ENCODE measurements at regions of chr4 and their contacts with region 1.

Region 1: DNA sequence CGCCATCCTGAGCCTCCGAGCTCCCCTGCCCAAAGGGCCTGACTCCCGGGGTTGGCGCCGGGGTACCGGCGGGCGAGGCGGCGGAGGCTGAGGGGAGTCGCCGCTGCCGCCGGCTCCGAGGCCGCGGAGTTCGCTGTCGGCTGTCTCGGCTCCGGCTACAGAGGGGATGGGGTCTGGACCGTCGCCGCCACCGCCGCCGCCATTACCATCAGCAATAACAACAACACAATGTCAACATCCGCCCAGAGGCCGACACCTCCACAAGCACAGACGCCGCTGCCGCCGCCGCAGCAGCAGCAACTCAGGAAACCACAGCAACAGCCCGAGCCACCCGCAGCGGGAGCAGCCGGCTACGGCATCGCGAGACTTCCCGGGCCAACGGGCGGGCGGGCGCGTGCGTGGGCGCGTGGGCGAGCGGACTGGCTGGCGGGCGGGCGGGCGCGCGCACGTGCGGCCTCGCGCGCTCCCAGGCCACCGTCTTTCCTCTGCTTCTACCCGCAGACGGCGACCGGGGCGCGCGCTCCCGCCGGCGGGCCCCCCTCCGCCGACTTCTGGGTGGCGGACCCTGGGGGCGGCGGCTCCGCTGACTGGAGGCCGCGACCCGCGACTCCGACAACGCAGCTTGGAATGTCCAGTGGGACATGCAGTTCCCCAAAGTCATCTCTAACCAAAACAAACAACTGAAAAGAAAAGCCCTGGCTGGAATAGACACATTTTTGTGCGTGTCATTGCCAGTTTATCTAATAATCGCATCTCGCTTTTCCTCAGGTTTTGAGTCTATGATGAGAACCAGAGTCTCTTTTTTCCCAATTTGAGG is at the start of gene CHIC2:
- DNase-seq: peak; percentile 96 to 99 (median 97)
- ATAC-seq: peak; percentile 74 to 95 (median 90)
- H3K4me3 ChIP-seq: peak within 1 kb of the TSS; percentile 84 to 100 (median 96)
- H3K27ac ChIP-seq: peak within 1 kb of the TSS; percentile 86 to 97 (median 94)
- H3K4me1 ChIP-seq: peaks cover 1 to 66% (median 53%) of the 10 kb centered on the region in 12 donors
- H3K27me3 ChIP-seq: no peaks in the 10 kb centered on the region
- CTCF ChIP-seq: no peak
- POLR2A ChIP-seq: peak; percentile 83 to 94
- total RNA-seq, gene CHIC2: 5.5 to 17.3 (median 11.2) TPM

Region 2: DNA sequence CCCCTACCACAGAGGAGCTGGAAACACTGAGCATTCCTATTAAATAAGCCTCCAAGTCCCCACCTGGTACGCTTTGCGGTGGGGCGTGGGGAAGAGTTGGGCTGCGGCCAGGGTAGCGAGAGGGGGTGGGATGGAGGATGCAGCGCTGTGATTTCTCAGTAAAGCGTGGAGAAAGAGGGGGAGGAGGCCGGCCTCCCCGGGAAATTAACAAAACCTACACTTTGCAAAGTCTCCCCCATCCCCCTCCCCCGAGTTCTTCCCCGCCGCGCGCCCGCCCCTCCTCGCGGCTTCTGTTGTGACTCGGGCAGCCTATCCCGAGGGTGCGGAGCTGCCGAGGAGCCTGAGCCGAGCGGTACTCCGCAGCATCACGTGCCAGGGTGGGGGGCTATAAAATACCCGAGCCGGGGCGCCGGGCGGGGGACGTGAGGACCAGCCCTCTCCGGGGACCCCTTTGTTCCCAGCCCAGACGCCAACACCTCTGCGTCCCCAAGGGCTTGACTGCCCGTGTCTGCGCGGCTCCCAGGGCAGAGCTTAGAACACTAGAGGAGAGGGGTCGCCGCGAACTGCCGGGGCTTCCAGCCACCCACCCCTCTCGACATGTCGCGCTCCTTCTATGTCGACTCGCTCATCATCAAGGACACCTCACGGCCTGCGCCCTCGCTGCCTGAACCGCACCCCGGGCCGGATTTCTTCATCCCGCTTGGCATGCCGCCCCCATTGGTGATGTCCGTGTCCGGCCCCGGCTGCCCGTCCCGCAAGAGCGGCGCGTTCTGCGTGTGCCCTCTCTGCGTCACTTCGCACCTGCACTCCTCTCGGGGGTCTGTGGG is 35.5 kb after region 1 on chr4 and contains the start of gene GSX2:
- intact Hi-C with region 1: loop called in 1 of 10 experiments (anchors 5 kb)
- DNase-seq: peak in 1 of 5 donors; percentile 31
- ATAC-seq: peak in 2 of 4 donors; percentile 18 to 26
- H3K4me3 ChIP-seq: peak within 1 kb of the TSS; percentile 19 to 53 (median 40)
- H3K27ac ChIP-seq: no peak within 1 kb of the TSS
- H3K4me1 ChIP-seq: peaks cover 0 to 39% (median 23%) of the 10 kb centered on the region in 12 donors
- H3K27me3 ChIP-seq: peaks cover 45 to 100% (median 92%) of the 10 kb centered on the region in 9 donors
- CTCF ChIP-seq: no peak
- POLR2A ChIP-seq: no peak
- total RNA-seq, gene GSX2: not detected

Measured in heart left ventricle (tissue), 16 donors.